BJ (cell line): ENCODE measurements at regions of chr11 and their contacts with region 1.

Region 1: GRCh38 chr11:2930704-2931428 is 1.6 kb upstream of the PHLDA2 start:
- DNase-seq: no peak
- H3K4me3 ChIP-seq: peak overlapping the region; percentile 90
- H3K27me3 ChIP-seq: no peaks in the 10 kb centered on the region
- CTCF ChIP-seq: peak; percentile 38

Region 2: GRCh38 chr11:2892215-2893020 is 38.4 kb before region 1 on chr11:
- CTCF ChIA-PET with region 1: interaction called, 22 read pairs
- POLR2A ChIA-PET with region 1: no interaction called
- DNase-seq: no peak
- H3K4me3 ChIP-seq: peak overlapping the region; percentile 44
- H3K27me3 ChIP-seq: no peaks in the 10 kb centered on the region
- CTCF ChIP-seq: peak; percentile 96

Region 3: DNA sequence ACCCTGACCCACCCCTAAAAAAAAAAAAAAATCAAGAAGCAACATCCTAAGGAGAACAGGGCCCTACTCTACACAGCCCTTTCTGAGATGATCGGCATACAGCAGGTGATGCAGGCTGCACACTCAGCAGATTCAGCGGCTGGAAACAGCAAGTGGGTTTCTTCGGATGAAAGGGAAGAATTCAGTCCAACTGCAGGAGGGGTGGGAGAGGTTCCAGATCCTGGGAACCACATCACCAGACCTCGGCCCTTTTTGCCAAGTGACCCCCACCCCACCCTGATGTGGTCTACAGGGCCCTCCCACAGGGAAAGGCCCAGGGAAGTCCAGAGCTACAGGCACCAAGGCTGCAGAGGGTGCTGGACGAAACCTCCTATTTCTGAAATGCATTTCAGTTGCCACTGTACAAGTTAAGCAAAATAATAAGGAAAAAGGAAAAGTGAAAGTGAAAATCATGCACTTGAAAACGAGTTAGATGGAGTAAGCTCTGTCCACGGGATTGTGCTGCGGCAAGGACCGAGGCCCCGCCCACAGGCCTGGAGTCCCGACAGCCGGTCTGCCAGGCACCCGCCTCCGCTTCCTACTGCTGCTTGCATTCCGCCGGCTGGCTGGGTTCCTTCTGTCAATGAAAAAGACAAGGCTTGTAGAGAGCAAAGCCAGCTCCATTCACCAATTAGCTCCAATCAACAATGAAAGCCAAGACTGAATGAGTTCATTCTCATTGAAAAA is 14.3 kb after region 1 on chr11:
- CTCF ChIA-PET with region 1: interaction called, 16 read pairs
- POLR2A ChIA-PET with region 1: no interaction called
- DNase-seq: peak; percentile 54
- H3K4me3 ChIP-seq: 0 out of 2 replicates have a peak overlapping the region, but pooled peaks have one; percentile 21
- H3K27me3 ChIP-seq: no peaks in the 10 kb centered on the region
- CTCF ChIP-seq: no peak

Region 4: DNA sequence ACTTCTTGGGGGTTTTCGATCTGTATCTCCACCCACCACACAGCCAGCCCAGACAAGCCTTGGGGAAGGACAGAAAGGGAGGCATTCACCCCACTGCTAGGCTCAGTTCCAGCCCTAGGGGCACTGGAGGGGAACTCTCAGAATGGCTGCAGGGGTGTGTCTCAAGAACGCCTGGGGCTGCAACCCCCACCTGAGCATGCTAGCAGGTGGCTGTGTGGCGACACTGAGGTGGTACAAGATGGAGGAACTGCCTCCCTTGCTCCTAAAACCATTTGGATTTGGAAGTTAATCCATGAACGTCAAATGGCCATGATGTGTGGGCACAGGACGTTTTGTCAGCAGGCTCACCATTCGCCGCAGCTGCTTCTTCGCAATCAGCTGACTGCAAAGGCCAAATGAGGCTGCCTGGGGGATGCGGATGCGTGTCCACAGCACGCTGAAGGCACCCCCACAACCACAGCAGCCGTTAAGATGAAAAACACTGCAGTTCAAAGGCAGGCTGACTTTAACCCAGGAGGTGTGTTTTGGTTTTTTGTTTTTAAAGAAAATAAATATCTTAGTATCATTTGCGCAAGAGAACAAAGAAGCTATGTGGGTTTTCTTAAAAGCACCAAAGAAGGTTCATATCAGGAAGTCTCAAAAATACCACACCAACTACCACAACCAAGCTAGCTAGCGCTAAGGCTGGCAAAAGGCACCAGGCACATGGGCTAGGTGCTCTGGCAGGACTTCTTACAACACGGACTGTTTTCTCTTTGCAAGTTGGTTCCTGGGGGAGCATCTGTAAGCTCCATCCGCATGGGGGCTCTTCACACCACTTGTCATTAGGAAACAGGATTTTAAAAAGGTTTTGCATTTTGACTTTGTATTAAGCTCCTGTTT is 83.4 kb after region 1 on chr11:
- CTCF ChIA-PET with region 1: no interaction called
- POLR2A ChIA-PET with region 1: no interaction called
- DNase-seq: no peak
- H3K4me3 ChIP-seq: no peak overlapping the region
- H3K27me3 ChIP-seq: no peaks in the 10 kb centered on the region
- CTCF ChIP-seq: no peak